Activated CD8-positive, alpha-beta memory T cell treated with anti-CD3 and anti-CD28 coated beads, Interleukin-2, amount 10 ng/mL, durations not matched to agents 7 days and 5 days (primary cell): ENCODE measurements at regions of chr5 and their contacts with region 1.

Region 1: DNA sequence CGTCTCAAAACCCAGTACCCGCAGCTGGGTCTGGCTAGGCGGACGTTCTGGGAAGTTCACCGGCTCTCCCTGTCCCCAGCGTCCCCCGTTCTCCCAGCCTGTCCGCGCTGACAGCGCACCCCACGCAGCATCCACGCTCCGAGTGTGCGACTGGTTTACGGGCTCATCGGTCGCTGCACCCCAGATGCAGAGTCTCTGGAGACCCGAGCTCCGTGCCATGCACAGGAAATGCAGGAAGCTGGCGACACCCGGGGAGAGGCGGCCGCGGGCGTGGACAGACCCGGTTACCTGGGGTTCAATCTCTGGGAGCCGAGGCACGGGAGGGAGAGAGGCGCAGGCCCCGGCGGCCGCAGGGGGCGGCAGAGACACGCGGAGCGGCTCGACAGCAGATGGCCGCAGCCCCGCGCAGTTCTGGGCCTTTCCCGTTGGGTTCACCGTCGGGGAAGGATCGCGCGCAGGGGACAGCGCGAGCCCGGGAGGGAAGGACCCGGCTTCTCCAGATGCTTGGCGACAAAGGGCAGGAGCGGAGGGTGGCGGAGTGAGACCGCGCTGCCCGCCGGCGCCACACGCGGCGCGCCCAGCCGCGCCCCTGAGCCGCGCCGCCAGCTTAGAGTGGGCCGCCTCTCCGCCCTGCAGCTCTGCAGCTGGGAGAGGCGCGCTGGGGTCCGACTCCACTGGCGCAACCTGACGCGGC is 558 bp downstream of the SHROOM1 start:
- DNase-seq: peak; percentile 80
- ATAC-seq: peak; percentile 90
- H3K4me3 Mint-ChIP-seq: peak overlapping the region; percentile 79
- H3K27ac Mint-ChIP-seq: peak overlapping the region; percentile 73
- H3K4me1 Mint-ChIP-seq: peaks cover 19% of the 10 kb centered on the region
- H3K27me3 Mint-ChIP-seq: peaks cover 49% of the 10 kb centered on the region

Region 2: GRCh38 chr5:132655821-132656773 is 173.8 kb before region 1 on chr5:
- CTCF ChIA-PET with region 1: no interaction called
- DNase-seq: peak; percentile 61
- ATAC-seq: peak; percentile 57
- H3K4me3 Mint-ChIP-seq: peak overlapping the region; percentile 39
- H3K27ac Mint-ChIP-seq: peak overlapping the region; percentile 69
- H3K4me1 Mint-ChIP-seq: peaks cover 33% of the 10 kb centered on the region
- H3K27me3 Mint-ChIP-seq: peaks cover 15% of the 10 kb centered on the region

Region 3: GRCh38 chr5:132866342-132867045 is 36.6 kb after region 1 on chr5 and contains the starts of genes GDF9 and UQCRQ:
- CTCF ChIA-PET with region 1: interaction called, 15 read pairs
- DNase-seq: peak; percentile 97
- ATAC-seq: peak; percentile 99
- H3K4me3 Mint-ChIP-seq: peak within 1 kb of the TSS; percentile 93
- H3K27ac Mint-ChIP-seq: peak within 1 kb of the TSS; percentile 99
- H3K4me1 Mint-ChIP-seq: peaks cover 28% of the 10 kb centered on the region
- H3K27me3 Mint-ChIP-seq: peaks cover 3% of the 10 kb centered on the region
- total RNA-seq, gene GDF9: 0.26 to 0.67 TPM
- total RNA-seq, gene UQCRQ: 344 to 446 TPM